ENCODE measurements at regions of chr22 and their contacts with region 1.

Region 1: DNA sequence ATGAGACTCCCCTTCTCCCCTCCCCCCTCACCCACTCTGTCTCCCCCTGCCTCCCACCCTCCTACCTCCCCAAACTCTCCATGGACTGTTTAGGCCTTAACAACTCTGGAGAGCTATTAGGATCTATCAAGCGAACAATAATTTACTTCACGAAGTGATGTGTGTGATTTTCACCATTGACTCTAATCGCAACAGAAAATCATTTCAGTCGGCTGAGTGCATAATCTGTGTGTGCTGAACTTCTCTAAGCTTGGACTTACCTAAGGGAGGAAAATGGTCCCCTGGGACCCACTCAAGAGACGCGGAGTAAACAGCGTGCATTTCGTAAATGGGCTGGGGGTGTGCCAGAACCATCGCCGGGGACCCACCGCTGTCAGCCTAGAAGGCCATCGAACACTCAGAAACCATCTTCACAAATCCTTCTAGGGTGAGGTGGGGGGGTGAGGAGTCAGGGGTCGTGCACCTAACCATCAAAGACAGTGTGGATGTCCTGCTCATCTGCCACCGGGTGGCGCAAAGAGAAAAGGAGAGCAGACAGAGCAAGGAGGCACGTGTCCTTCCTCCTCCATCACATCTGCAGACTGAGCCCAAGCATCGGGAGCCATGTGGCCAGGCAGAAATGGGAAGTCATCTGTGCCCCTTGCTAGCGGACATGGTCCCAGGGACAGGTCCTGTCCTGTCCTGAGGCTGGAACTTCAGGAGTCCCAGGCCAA is 62.1 kb upstream of the NUP50 start:
- DNase-seq: peak; percentile 49
- ATAC-seq: peak; percentile 64
- H3K4me3 Mint-ChIP-seq: no peak overlapping the region
- H3K27ac Mint-ChIP-seq: no peak overlapping the region
- H3K4me1 Mint-ChIP-seq: no peaks in the 10 kb centered on the region
- H3K27me3 Mint-ChIP-seq: peaks cover 14% of the 10 kb centered on the region

Region 2: GRCh38 chr22:45163451-45164269 is 62.0 kb after region 1 on chr22 and contains the start of gene NUP50:
- CTCF ChIA-PET with region 1: interaction called, 11 read pairs
- POLR2A ChIA-PET with region 1: no interaction called
- DNase-seq: peak; percentile 97
- ATAC-seq: peak; percentile 89
- H3K4me3 Mint-ChIP-seq: peak within 1 kb of the TSS; percentile 98
- H3K27ac Mint-ChIP-seq: peak within 1 kb of the TSS; percentile 97
- H3K4me1 Mint-ChIP-seq: peaks cover 64% of the 10 kb centered on the region
- H3K27me3 Mint-ChIP-seq: no peaks in the 10 kb centered on the region
- total RNA-seq, gene NUP50: 161 to 167 TPM

Measured in activated CD8-positive, alpha-beta T cell treated with anti-CD3 and anti-CD28 coated beads, Interleukin-2, amount 10 ng/mL, durations not matched to agents 7 days and 5 days (primary cell).